ENCODE measurements at regions of chr16 and their contacts with region 1.

Region 1: DNA sequence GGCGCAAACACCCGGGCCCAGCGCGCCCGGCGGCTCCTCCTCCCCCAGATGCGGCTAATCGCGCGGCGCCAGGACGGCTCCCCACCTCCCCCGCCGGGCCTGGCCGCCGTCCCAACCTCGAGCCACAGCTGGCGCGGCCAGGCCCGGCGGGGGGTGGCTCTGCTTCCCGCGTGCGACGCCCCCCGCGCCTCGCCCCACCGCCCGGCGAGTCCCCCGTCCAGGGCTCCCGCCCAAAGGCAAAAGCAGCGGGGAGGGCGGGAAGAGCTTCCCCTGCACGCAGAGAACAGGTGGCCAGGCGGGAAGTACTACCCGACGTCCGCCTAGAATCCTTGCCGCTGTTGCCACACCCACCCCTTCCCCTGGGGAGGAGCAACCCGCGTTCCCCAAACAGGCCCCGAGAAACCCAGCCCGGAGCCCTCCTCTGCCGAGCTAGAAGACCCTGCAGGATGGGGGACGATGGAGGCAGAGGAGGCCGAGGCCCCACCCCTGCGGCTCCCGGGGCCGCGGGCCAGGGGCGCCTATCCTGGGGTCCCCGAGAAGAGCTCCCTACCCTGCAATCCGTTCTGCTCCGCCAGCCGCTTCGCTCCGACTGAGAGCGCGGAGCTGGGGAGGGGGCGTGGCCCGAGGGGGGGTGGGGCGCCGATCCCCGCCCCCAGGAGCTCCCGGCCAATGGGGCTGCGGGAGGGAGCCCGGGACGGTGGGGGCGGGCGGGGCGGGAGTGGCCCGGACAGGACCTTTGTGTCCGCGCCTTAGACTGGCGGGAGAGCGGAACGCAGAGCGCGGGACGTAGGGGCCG is at the start of gene CARHSP1:
- DNase-seq: peak; percentile 77
- ATAC-seq: peak; percentile 79
- H3K4me3 Mint-ChIP-seq: peak within 1 kb of the TSS; percentile 93
- H3K27ac Mint-ChIP-seq: peak within 1 kb of the TSS; percentile 85
- H3K4me1 Mint-ChIP-seq: peaks cover 60% of the 10 kb centered on the region
- H3K27me3 Mint-ChIP-seq: no peaks in the 10 kb centered on the region
- CTCF ChIP-seq: no peak
- total RNA-seq, gene CARHSP1: 21.3 and 27.0 TPM in 2 replicates

Region 2: DNA sequence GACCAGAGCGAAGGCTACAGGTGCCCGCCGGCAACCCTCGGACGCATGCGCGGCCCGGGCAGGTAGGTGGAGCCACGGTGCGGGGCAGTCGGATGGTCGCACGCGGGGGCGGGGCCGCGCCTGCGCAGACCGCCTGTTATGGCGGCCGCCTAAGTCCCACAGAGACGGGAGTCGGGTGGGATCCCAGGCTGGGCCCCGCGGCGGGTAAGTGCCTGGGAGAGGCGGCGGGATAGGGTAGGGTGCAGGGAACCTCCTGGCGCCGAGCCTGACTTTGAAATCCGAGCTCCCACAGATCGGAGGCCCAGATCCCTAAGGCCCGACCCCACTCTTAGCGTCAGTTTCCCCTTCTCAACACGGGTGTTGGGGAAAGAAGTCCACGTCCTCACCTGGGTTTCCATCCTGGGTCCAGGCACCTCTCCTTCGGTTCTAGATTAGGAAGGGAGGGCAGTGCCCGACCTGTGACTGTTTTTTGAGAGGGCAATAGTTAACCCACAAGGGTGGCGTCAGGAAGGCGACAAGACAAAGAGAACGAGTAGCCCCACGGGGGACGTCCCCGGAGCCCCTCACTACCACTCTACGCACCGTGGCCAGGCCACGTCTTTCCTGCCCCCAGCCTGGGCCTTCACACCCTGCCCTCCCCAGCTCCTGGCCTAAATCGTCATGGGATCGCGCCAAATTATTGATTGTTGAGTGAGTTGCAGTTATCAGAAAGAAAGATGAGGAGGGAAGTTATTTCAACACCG is 246.9 kb before region 1 on chr16 and contains the start of gene METTL22:
- CTCF ChIA-PET with region 1: no interaction called
- POLR2A ChIA-PET with region 1: interaction called, 3 read pairs
- intact Hi-C with region 1: loop called (anchors 2 kb)
- DNase-seq: peak; percentile 96
- ATAC-seq: peak; percentile 99
- H3K4me3 Mint-ChIP-seq: peak within 1 kb of the TSS; percentile 95
- H3K27ac Mint-ChIP-seq: peak within 1 kb of the TSS; percentile 79
- H3K4me1 Mint-ChIP-seq: peaks cover 13% of the 10 kb centered on the region
- H3K27me3 Mint-ChIP-seq: no peaks in the 10 kb centered on the region
- CTCF ChIP-seq: no peak
- total RNA-seq, gene METTL22: 36.4 and 49.6 TPM in 2 replicates

Region 3: DNA sequence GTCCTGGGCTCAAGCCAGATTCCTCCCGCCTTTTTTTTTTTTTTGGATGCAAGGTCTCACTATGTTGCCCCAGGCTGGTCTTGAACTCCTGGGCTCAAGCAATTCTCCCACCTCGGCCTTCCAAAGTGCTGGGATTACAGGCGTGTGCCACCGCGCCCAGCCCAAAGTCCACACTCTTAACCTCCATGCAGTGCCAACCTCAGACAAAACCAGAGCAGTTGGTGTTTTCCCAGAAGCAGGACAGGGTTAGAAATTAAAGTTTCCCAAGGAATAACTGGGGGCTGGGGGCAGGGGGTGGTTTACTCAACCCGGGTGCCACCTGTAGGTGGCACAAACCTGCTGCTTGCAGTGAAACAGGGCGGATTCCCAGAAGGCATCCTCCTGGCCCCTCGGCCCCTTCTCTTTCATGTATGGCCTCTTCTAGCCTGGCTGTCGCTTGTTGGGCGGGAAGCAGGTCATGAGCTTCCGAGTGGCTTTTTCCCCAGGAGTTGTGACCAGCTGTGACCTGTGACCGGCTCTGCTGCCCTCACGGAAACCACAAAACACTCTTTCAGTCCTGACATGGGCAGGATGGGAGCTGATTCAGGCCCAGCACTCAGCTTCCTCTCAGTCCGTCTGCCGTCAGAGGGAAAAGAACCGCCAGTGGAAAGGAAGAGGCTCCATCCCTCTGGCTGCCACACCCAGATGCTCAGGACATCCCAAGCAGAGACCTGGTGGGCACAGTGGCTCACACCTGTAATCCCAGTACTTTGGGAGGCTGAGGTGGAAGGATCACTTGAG is 120.7 kb after region 1 on chr16:
- CTCF ChIA-PET with region 1: no interaction called
- POLR2A ChIA-PET with region 1: no interaction called
- intact Hi-C with region 1: no loop called
- DNase-seq: no peak
- ATAC-seq: no peak
- H3K4me3 Mint-ChIP-seq: no peak overlapping the region
- H3K27ac Mint-ChIP-seq: no peak overlapping the region
- H3K4me1 Mint-ChIP-seq: no peaks in the 10 kb centered on the region
- H3K27me3 Mint-ChIP-seq: no peaks in the 10 kb centered on the region
- CTCF ChIP-seq: no peak

Measured in activated B cell treated with CpG ODN at 0.5 μM for 24 hours (primary cell).